Activated naive CD4-positive, alpha-beta T cell treated with anti-CD3 and anti-CD28 coated beads for 36 hours (primary cell): ENCODE measurements at regions of chr2 and their contacts with region 1.

Region 1: DNA sequence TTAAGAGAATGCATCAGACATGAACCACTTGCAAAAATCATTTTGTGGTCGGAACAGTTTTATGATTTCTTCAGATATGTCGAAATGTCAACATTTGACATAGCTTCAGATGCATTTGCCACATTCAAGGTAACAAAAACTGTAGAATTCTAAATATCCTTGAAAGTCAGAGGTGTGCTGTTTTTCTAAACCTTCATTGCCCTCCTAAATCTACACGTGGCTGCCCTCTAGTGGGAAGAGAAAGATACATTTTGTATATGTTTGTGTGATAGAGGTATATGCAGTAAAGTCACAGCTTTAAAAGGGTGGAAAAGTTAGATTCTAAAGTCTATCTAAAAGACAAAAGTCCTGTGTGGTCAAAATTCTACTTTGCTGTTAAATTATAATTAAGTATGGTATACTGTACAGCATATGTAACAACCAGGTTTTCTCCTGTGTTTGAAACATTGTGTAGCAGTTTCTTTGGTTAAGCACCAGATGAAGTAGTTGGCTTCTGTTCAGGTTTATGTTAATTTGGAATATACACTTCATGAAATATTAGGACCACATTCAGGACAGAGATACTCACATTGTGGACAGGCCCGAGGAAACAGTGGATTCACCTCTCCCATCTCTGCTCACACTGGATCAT is 65.9 kb upstream of the ITM2C start:
- DNase-seq: peak; percentile 72
- H3K4me3 Mint-ChIP-seq: no peak overlapping the region
- H3K27ac Mint-ChIP-seq: no peak overlapping the region
- H3K4me1 Mint-ChIP-seq: peaks cover 14% of the 10 kb centered on the region
- H3K27me3 Mint-ChIP-seq: no peaks in the 10 kb centered on the region

Region 2: DNA sequence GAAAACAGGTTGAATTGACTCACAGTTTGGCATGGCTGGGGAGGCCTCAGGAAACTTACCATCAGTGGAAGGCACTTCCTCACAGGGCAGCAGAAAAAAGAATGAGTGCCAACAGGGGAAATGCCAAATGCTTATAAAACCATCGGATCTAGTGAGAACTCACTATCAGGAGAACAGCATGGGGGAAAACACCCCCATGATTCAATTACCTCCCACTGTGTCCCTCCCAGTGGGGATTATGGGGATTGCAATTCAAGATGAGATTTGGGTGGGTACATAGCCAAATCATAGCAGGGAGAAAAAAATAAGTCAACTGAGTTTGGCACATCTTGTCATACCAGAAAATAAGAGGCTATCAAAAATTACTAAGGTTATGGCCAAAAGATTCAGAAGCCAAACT is 973.4 kb before region 1 on chr2:
- CTCF ChIA-PET with region 1: no interaction called
- intact Hi-C with region 1: loop called (anchors 10 kb)
- DNase-seq: no peak
- H3K4me3 Mint-ChIP-seq: no peak overlapping the region
- H3K27ac Mint-ChIP-seq: no peak overlapping the region
- H3K4me1 Mint-ChIP-seq: peaks cover 21% of the 10 kb centered on the region
- H3K27me3 Mint-ChIP-seq: no peaks in the 10 kb centered on the region

Region 3: GRCh38 chr2:230007931-230008707 is 790.8 kb before region 1 on chr2:
- CTCF ChIA-PET with region 1: interaction called, 3 read pairs
- intact Hi-C with region 1: loop called (anchors 1 kb)
- DNase-seq: peak; percentile 95
- H3K4me3 Mint-ChIP-seq: no peak overlapping the region
- H3K27ac Mint-ChIP-seq: no peak overlapping the region
- H3K4me1 Mint-ChIP-seq: peaks cover 5% of the 10 kb centered on the region
- H3K27me3 Mint-ChIP-seq: no peaks in the 10 kb centered on the region

Region 4: GRCh38 chr2:230441227-230441897 is 357.5 kb before region 1 on chr2:
- CTCF ChIA-PET with region 1: no interaction called
- intact Hi-C with region 1: loop called (anchors 10 kb)
- DNase-seq: peak; percentile 38
- H3K4me3 Mint-ChIP-seq: no peak overlapping the region
- H3K27ac Mint-ChIP-seq: peak overlapping the region; percentile 30
- H3K4me1 Mint-ChIP-seq: peaks cover 52% of the 10 kb centered on the region
- H3K27me3 Mint-ChIP-seq: no peaks in the 10 kb centered on the region

Region 5: DNA sequence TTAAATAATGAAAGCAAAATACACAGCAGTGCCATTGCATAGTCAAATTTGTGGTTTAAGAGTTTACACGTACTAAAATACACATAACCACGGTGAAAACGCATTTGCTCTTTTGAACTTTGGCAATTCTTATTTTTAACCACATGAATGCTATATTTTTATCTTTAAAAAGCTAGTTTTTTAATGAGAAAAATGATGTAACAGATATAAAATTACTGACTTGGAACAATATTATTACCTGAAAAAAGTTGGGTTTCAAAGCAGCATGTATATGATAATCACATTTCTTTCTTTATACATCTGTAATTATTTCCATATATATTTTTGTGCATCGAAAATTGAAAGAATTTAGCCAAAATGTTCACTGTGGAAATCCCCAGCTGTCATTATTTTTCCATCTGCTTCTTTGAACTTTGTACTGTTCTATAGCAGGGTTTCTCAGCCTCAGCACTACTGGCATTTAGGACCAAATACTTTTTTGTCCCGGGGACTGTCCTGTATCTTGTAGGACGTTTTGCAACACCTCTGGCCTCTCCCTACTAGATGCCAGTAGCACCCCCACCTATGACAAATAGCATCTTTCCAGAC is 162.1 kb before region 1 on chr2:
- CTCF ChIA-PET with region 1: interaction called, 10 read pairs
- intact Hi-C with region 1: loop called (anchors 1 kb)
- DNase-seq: peak; percentile 49
- H3K4me3 Mint-ChIP-seq: no peak overlapping the region
- H3K27ac Mint-ChIP-seq: peak overlapping the region; percentile 86
- H3K4me1 Mint-ChIP-seq: peaks cover 26% of the 10 kb centered on the region
- H3K27me3 Mint-ChIP-seq: no peaks in the 10 kb centered on the region

Region 6: GRCh38 chr2:230721712-230722111 is 77.2 kb before region 1 on chr2:
- CTCF ChIA-PET with region 1: interaction called, 23 read pairs
- intact Hi-C with region 1: loop called (anchors 2 kb)
- DNase-seq: peak; percentile 43
- H3K4me3 Mint-ChIP-seq: peak overlapping the region; percentile 4
- H3K27ac Mint-ChIP-seq: peak overlapping the region; percentile 76
- H3K4me1 Mint-ChIP-seq: peaks cover 87% of the 10 kb centered on the region
- H3K27me3 Mint-ChIP-seq: no peaks in the 10 kb centered on the region

Region 7: GRCh38 chr2:230765611-230766300 is 33.1 kb before region 1 on chr2:
- CTCF ChIA-PET with region 1: interaction called, 18 read pairs
- intact Hi-C with region 1: loop called (anchors 1 kb)
- DNase-seq: no peak
- H3K4me3 Mint-ChIP-seq: no peak overlapping the region
- H3K27ac Mint-ChIP-seq: peak overlapping the region; percentile 85
- H3K4me1 Mint-ChIP-seq: peaks cover 64% of the 10 kb centered on the region
- H3K27me3 Mint-ChIP-seq: no peaks in the 10 kb centered on the region